ENCODE measurements at regions of chr10 and their contacts with region 1.

Region 1: DNA sequence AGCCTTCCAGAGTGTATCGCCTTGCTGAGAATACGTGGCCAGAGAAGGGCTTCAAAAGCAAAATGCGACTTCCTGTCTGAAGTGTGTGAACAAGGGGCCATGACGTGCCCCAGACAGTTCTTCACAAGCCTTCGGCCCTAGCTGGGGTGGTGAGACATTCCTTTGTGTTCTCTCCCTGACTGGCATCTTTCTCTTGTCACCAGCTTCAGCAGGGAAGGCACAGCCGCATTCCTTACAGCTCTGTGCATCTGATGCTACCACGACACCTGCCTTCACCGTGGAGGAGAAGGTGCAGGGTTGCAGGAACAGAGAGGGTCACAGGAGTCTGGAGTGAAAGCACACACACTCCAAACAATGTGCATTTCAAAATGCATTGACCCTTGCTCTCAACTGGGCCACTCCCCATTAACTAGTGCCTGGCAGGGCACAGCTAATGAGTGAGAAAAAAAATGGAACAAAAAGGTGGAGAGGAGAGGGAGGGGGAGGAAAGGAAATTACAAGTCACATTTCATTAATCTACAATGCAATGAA is 93.4 kb downstream of the GPR26 start:
- DNase-seq: no peak
- H3K4me3 ChIP-seq: no peak overlapping the region
- H3K4me3 Mint-ChIP-seq: no peak overlapping the region
- H3K27ac ChIP-seq: no peak overlapping the region
- H3K27ac Mint-ChIP-seq: no peak overlapping the region
- H3K4me1 ChIP-seq: no peaks in the 10 kb centered on the region
- H3K4me1 Mint-ChIP-seq: no peaks in the 10 kb centered on the region
- H3K27me3 ChIP-seq: peaks cover 0 to 7% of the 10 kb centered on the region in 2 donors
- H3K27me3 Mint-ChIP-seq: peaks cover 14 to 19% (median 16%) of the 10 kb centered on the region in 3 donors
- CTCF ChIP-seq: no peak

Region 2: DNA sequence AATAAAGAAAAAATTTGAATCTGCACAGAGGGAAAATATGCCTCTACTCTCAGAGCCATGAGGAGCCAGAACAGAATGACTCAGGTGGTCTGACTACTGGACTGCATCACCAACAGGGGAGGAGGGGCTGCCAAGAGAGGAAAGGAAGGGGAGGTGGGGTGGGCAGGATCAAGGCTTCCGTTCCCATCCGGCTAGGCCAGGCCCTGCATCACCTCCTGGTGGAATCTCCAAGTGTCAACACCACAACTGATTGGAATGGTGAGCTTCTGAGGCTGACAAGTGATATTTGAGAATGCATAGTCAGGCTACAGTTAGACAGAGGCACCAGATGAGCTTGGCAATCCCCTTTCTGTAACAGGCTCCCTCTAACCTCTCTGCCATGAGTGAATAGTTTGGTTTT is 103.8 kb before region 1 on chr10:
- intact Hi-C with region 1: no loop called
- DNase-seq: no peak
- H3K4me3 ChIP-seq: no peak overlapping the region
- H3K4me3 Mint-ChIP-seq: no peak overlapping the region
- H3K27ac ChIP-seq: no peak overlapping the region
- H3K27ac Mint-ChIP-seq: no peak overlapping the region
- H3K4me1 ChIP-seq: no peaks in the 10 kb centered on the region
- H3K4me1 Mint-ChIP-seq: no peaks in the 10 kb centered on the region
- H3K27me3 ChIP-seq: no peaks in the 10 kb centered on the region
- H3K27me3 Mint-ChIP-seq: peaks cover 0 to 3% (median 2%) of the 10 kb centered on the region in 3 donors
- CTCF ChIP-seq: no peak

Region 3: GRCh38 chr10:123788801-123789380 is 29.3 kb after region 1 on chr10:
- intact Hi-C with region 1: loop called in 1 of 2 experiments (anchors 2 kb)
- DNase-seq: no peak
- H3K4me3 ChIP-seq: no peak overlapping the region
- H3K4me3 Mint-ChIP-seq: no peak overlapping the region
- H3K27ac ChIP-seq: no peak overlapping the region
- H3K27ac Mint-ChIP-seq: no peak overlapping the region
- H3K4me1 ChIP-seq: no peaks in the 10 kb centered on the region
- H3K4me1 Mint-ChIP-seq: no peaks in the 10 kb centered on the region
- H3K27me3 ChIP-seq: peaks cover 0 to 1% of the 10 kb centered on the region in 2 donors
- H3K27me3 Mint-ChIP-seq: peaks cover 12 to 19% (median 13%) of the 10 kb centered on the region in 3 donors
- CTCF ChIP-seq: no peak

Region 4: DNA sequence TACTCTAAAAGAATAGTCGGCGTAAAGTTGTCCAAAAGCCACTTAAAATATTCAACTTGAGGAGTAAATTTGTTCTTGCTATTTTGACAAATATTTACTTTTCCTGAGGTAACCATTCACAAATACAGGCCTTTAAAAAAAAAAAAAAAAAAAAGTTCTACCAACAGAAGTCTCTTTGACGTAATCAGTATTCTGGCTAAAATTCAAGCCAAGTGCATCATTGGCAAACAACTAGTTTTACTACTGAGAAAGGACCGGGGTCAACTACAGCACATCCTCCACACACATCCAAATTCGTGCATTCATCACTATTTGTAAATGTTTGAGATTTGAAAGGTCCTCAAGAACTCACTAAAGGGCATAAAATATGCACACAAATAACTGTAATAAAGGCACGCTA is 657.2 kb after region 1 on chr10:
- intact Hi-C with region 1: no loop called
- DNase-seq: no peak
- H3K4me3 ChIP-seq: no peak overlapping the region
- H3K4me3 Mint-ChIP-seq: peak overlapping the region in 1 of 2 donors; percentile 2
- H3K27ac ChIP-seq: no peak overlapping the region
- H3K27ac Mint-ChIP-seq: no peak overlapping the region
- H3K4me1 ChIP-seq: peaks cover 14 to 35% of the 10 kb centered on the region in 2 donors
- H3K4me1 Mint-ChIP-seq: peaks cover 23% of the 10 kb centered on the region
- H3K27me3 ChIP-seq: peaks cover 9 to 25% of the 10 kb centered on the region in 2 donors
- H3K27me3 Mint-ChIP-seq: peaks cover 19 to 24% (median 21%) of the 10 kb centered on the region in 3 donors
- CTCF ChIP-seq: no peak

Measured in CD14-positive monocyte (primary cell).